Pancreas (tissue), 10 donors: ENCODE measurements at regions of chr10 and their contacts with region 1.

Region 1: DNA sequence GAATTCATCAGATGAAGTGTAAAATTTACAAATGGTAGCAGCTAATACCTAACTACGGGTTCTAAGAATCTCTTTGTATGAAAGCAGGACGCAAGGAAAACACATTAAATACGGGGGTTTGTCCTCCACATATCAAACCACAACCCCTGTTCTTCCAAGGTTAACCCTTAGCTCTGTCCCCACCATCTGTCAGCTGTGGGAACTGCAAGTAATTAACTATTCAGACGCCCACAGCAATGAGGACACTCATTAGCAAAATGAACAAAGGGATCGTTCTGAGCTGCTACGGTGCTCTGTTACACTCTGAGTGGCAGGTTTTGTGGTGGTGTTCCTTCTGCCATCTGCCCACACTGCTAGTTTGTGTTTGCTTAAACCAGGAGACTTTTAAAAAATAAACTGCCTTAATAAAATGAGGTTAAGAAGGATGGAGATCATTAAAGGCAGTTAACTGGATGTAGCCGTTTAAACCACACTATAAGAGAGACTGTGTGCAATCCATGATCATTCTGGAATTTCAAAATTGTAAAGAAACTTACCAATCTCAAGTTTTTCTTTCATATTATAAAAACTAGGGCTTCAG is 51.4 kb downstream of the C10orf67 start:
- DNase-seq: peak in 2 of 6 donors; percentile 52 to 66
- ATAC-seq: peak; percentile 83 to 90 (median 84)
- H3K4me3 ChIP-seq: no peak overlapping the region
- H3K27ac ChIP-seq: no peak overlapping the region
- H3K4me1 ChIP-seq: peaks cover 0 to 7% (median 0%) of the 10 kb centered on the region in 3 donors
- H3K27me3 ChIP-seq: no peaks in the 10 kb centered on the region
- CTCF ChIP-seq: peak in 2 of 4 donors; percentile 47 to 48

Region 2: DNA sequence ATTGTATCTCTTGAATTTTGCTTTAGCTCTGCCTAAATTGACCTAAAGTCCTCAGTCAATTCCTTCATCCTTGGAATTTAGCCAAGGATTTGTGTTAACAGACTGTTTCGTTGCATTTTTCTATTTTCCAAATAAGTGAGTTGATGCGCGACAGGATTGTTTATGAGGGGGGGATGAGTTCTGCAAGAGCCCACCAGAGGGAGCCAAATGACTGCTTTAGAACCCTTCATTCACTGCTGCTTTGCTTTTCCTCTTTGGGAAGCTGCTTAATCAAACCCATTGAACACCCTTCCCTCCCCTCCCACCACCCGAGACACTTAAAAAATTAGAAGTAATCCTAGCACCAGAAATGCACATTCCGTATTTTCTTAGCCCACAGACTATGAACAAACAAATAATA is 134.9 kb before region 1 on chr10:
- intact Hi-C with region 1: loop called in 2 of 3 experiments (anchors 5 to 10 kb)
- DNase-seq: peak in 3 of 6 donors; percentile 35 to 66 (median 49)
- ATAC-seq: peak; percentile 86 to 93 (median 90)
- H3K4me3 ChIP-seq: no peak overlapping the region
- H3K27ac ChIP-seq: no peak overlapping the region
- H3K4me1 ChIP-seq: peaks cover 0 to 12% (median 0%) of the 10 kb centered on the region in 3 donors
- H3K27me3 ChIP-seq: no peaks in the 10 kb centered on the region
- CTCF ChIP-seq: peak; percentile 43 to 73 (median 67)

Region 3: DNA sequence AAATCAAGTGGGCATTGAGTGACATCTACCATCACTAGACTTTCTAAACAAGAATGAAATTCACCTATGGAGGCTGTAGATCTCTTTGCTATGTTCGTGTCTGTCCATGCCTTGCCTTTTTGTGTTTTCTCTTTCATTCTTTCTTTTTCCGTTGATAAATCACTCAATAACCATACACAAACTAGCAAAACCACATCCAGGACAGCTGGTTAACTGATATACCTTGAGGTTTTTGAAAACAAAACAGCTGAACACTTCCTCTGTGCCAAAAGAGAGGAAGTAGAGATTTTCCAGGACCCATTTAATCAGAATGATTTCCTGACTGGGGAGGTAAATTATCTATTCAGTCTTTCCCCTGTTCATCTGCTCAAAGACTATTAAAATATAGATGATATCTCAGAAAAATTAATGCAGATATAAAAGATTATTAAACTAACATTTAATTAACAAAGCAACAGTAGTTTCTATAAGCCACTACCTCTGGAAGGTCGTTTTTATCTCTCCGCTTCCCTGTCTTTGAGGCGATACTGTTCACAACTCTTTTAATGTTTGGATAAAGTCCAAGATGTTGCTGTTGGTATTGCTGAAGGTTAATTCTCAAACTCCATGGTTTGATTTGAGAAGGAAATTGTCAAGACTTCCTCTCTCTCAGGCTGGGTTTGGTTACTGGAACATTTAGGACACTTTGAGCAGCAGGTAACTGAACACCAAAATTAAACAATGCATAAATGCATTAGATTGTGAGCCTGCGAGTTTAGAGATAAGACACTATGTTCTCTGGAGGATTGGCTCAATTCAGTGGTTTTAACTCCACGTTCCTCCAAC is 75.8 kb after region 1 on chr10:
- intact Hi-C with region 1: no loop called
- DNase-seq: no peak
- ATAC-seq: no peak
- H3K4me3 ChIP-seq: no peak overlapping the region
- H3K27ac ChIP-seq: no peak overlapping the region
- H3K4me1 ChIP-seq: no peaks in the 10 kb centered on the region
- H3K27me3 ChIP-seq: no peaks in the 10 kb centered on the region
- CTCF ChIP-seq: no peak

Region 4: GRCh38 chr10:23453465-23453864 is 160.2 kb after region 1 on chr10:
- intact Hi-C with region 1: no loop called
- DNase-seq: no peak
- ATAC-seq: no peak
- H3K4me3 ChIP-seq: no peak overlapping the region
- H3K27ac ChIP-seq: no peak overlapping the region
- H3K4me1 ChIP-seq: no peaks in the 10 kb centered on the region
- H3K27me3 ChIP-seq: no peaks in the 10 kb centered on the region
- CTCF ChIP-seq: no peak